Heart left ventricle (tissue), 16 donors: ENCODE measurements at regions of chr2 and their contacts with region 1.

Region 1: GRCh38 chr2:219689676-219690628 is 62.5 kb downstream of the SLC4A3 start:
- DNase-seq: peak in 2 of 5 donors; percentile 29 to 31
- ATAC-seq: peak in 3 of 4 donors; percentile 56 to 68 (median 68)
- H3K4me3 ChIP-seq: no peak overlapping the region
- H3K27ac ChIP-seq: peak overlapping the region in 9 of 12 donors; percentile 40 to 80 (median 67)
- H3K4me1 ChIP-seq: peaks cover 0 to 14% (median 5%) of the 10 kb centered on the region in 12 donors
- H3K27me3 ChIP-seq: peaks cover 0 to 12% (median 0%) of the 10 kb centered on the region in 9 donors
- CTCF ChIP-seq: peak; percentile 68 to 85 (median 78)
- POLR2A ChIP-seq: no peak

Region 2: GRCh38 chr2:219537657-219538488 is 152.1 kb before region 1 on chr2:
- intact Hi-C with region 1: loop called (anchors 2 to 5 kb)
- DNase-seq: no peak
- ATAC-seq: no peak
- H3K4me3 ChIP-seq: no peak overlapping the region
- H3K27ac ChIP-seq: peak overlapping the region in 2 of 12 donors; percentile 29
- H3K4me1 ChIP-seq: peaks cover 0 to 36% (median 18%) of the 10 kb centered on the region in 12 donors
- H3K27me3 ChIP-seq: peaks cover 0 to 12% (median 2%) of the 10 kb centered on the region in 9 donors
- CTCF ChIP-seq: no peak
- POLR2A ChIP-seq: no peak

Region 3: DNA sequence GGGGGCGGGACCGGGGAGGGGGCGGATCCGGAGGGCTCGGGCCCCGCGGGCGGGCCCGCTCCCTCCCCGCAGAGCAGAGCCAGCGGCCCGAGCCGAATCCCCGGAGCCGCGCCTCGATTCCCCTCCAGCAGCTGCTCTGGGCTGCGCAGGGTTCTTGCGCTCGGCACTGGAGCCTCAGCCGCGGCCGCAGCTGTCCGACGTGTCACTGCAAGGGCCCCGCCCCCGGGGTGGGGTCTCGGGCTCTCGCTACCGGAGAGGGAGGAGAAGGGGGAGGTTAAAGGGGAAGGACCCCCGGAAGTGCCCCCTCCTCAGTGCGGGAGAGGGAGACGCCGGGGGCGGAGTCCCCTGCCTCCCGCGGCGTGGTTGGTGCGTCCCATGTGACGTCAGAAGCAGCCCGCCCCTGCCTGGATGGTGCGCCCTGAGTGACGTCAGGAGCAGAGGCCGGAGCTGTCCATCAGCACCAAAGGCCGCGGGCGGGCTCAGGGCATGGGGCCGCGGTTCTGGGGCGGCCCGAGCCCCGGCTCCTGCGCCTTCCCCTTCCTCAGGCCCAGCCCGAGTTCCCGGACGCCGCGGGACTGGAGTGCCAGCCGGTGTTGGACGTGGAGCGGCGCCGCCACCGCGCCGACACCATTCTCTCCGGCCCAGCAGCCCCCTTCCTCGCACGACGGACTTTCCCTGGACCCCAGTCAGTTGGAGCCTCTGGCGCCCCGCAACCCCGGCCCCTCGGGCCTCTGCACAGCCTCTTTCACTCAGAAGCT is 146.2 kb before region 1 on chr2 and contains the starts of genes CHPF and TMEM198:
- intact Hi-C with region 1: loop called (anchors 2 to 5 kb)
- DNase-seq: peak; percentile 97 to 99 (median 98)
- ATAC-seq: peak; percentile 92 to 95 (median 93)
- H3K4me3 ChIP-seq: peak within 1 kb of the TSS; percentile 46 to 92 (median 73)
- H3K27ac ChIP-seq: peak within 1 kb of the TSS; percentile 43 to 97 (median 88)
- H3K4me1 ChIP-seq: peaks cover 0 to 35% (median 25%) of the 10 kb centered on the region in 12 donors
- H3K27me3 ChIP-seq: peaks cover 0 to 21% (median 0%) of the 10 kb centered on the region in 9 donors
- CTCF ChIP-seq: no peak
- POLR2A ChIP-seq: peak in 1 of 2 donors; percentile 75
- total RNA-seq, gene CHPF: 77.9 to 196 (median 138) TPM
- total RNA-seq, gene TMEM198: 0.65 to 4.7 (median 2.3) TPM